ENCODE measurements at regions of chr20 and their contacts with region 1.

Region 1: GRCh38 chr20:50189681-50190582 is 698 bp upstream of the CEBPB start:
- DNase-seq: peak; percentile 91
- H3K4me3 ChIP-seq: peak overlapping the region; percentile 85
- H3K27ac ChIP-seq: peak overlapping the region; percentile 99
- H3K4me1 ChIP-seq: no peaks in the 10 kb centered on the region
- H3K27me3 ChIP-seq: no peaks in the 10 kb centered on the region
- CTCF ChIP-seq: peak; percentile 35

Region 2: GRCh38 chr20:50058747-50059404 is 131.1 kb before region 1 on chr20:
- intact Hi-C with region 1: no loop called
- DNase-seq: no peak
- H3K4me3 ChIP-seq: no peak overlapping the region
- H3K27ac ChIP-seq: no peak overlapping the region
- H3K4me1 ChIP-seq: no peaks in the 10 kb centered on the region
- H3K27me3 ChIP-seq: no peaks in the 10 kb centered on the region
- CTCF ChIP-seq: no peak

Region 3: DNA sequence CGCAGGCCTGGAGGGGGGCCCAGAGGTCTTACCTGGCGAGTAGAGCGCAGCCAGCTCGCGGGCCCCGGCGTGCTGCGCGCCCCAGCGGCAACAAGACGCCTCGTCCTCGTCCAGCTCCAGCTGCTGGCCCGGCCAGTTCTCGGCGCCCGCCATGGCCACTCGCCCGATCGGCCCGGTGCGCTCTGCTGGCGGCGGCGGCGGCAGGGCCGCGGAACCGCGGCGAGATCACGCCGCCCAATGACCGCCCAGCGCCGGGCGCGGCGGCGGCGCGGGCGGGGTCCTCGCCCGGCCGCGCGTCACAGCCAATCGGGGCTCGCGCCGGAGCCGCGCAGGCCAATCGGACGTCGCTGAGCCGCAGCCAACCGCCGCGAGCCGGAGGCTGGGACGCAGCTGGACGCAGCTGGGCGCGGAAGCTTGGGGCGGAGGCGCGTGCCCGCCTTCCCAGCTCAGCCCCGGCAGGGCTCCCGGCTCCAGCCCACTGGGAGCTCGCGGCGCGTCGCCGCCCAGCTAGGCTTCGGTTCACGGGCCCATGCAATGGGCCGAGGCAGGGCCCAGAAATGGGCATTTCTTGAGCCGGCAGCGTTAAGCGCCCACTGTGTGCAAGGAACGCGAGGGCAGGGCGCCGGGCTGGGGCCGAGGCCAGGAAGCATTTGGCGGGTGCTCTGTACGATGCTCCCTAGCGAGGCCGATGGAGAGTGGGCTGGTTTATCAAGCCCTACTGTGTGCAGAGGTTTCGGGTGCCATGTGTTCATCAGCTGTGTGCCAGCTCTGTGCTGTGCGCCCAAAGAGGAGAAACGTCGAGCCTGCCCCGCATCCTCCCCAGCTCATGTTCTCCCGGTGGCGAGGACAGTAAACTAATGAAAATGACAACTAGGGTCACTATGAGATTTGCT is 36.2 kb before region 1 on chr20 and contains the start of gene PEDS1:
- intact Hi-C with region 1: no loop called
- DNase-seq: peak; percentile 89
- H3K4me3 ChIP-seq: peak within 1 kb of the TSS; percentile 95
- H3K27ac ChIP-seq: peak within 1 kb of the TSS; percentile 94
- H3K4me1 ChIP-seq: peaks cover 24% of the 10 kb centered on the region
- H3K27me3 ChIP-seq: no peaks in the 10 kb centered on the region
- CTCF ChIP-seq: no peak
- total RNA-seq, gene PEDS1: 23.1 to 29.1 TPM

Region 4: DNA sequence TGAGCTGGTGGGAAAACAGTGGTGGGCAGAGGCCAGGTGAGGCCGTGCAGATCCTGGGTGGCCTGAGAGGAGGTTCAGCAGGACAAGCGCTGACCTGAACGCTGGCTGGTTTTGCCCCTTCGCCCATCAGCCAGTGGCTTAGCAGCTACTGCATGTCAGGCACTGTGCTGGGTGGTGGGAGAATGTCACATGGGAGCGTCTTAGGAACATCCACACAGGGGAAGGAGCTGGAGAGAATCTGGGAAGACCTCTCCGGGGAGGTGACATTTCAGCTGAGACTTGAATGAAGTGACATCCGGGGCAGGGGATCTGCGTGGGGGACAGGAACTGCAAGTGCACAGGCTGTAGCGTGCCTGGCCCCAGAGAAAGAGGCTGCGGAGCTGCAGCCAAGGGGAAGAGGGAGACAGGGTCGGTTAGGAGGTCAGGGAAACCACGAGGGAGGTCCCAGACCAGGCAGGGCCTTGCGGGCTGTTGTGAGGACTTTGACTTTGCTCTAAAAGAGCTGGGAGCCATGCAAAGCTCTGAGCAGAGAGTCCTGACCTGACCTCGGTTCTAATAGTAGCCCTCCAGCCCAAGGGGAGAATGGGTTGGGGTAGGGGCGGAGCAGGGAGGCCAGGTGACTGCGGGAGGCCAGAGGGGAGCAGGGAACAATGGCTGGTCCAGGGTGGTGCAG is 163.5 kb after region 1 on chr20:
- intact Hi-C with region 1: loop called (anchors 10 kb)
- DNase-seq: no peak
- H3K4me3 ChIP-seq: no peak overlapping the region
- H3K27ac ChIP-seq: no peak overlapping the region
- H3K4me1 ChIP-seq: no peaks in the 10 kb centered on the region
- H3K27me3 ChIP-seq: no peaks in the 10 kb centered on the region
- CTCF ChIP-seq: no peak

Region 5: DNA sequence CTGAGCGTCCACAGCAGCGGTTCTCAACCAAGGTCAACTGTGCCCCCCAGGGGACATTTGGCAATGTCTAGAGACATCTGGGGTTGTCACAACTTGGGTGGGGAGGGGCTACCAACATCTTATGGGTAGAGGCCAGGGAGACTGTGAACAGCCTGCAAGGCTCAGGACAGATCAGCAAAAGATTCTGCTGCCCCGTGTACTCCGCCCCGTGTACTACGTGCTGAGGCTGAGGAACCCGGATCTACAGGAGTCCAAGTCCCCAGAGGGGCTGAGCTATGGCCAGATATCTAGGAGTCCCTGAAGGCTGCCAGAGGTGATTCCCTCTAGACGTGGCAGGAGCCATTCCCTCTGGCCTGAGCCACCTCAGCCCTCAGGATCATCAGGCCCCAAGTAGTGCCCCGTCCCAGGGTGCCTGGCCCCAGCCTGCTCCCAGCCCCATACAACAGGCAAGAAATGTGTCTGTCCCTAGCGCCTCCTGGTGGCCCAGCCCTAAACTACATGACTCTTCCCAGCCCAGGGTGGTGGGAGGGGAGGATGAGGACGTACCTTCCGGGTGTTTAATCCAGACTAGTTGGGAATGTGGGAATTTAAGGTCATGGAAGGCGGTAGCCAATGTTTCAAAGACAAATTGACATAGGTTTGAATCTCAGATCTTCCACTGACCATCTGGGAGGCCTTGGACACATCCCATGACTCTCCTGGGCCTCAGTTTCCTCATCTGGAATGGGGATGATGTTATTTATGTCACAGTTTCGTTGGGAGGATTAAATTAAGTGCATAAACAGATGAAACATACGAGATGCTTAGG is 270.7 kb after region 1 on chr20:
- intact Hi-C with region 1: loop called (anchors 2 kb)
- DNase-seq: peak; percentile 95
- H3K4me3 ChIP-seq: no peak overlapping the region
- H3K27ac ChIP-seq: no peak overlapping the region
- H3K4me1 ChIP-seq: peaks cover 5% of the 10 kb centered on the region
- H3K27me3 ChIP-seq: no peaks in the 10 kb centered on the region
- CTCF ChIP-seq: peak; percentile 92

Region 6: GRCh38 chr20:50575847-50576720 is 386.2 kb after region 1 on chr20:
- intact Hi-C with region 1: loop called (anchors 5 kb)
- DNase-seq: peak; percentile 76
- H3K4me3 ChIP-seq: no peak overlapping the region
- H3K27ac ChIP-seq: no peak overlapping the region
- H3K4me1 ChIP-seq: peaks cover 4% of the 10 kb centered on the region
- H3K27me3 ChIP-seq: no peaks in the 10 kb centered on the region
- CTCF ChIP-seq: peak; percentile 78

Region 7: DNA sequence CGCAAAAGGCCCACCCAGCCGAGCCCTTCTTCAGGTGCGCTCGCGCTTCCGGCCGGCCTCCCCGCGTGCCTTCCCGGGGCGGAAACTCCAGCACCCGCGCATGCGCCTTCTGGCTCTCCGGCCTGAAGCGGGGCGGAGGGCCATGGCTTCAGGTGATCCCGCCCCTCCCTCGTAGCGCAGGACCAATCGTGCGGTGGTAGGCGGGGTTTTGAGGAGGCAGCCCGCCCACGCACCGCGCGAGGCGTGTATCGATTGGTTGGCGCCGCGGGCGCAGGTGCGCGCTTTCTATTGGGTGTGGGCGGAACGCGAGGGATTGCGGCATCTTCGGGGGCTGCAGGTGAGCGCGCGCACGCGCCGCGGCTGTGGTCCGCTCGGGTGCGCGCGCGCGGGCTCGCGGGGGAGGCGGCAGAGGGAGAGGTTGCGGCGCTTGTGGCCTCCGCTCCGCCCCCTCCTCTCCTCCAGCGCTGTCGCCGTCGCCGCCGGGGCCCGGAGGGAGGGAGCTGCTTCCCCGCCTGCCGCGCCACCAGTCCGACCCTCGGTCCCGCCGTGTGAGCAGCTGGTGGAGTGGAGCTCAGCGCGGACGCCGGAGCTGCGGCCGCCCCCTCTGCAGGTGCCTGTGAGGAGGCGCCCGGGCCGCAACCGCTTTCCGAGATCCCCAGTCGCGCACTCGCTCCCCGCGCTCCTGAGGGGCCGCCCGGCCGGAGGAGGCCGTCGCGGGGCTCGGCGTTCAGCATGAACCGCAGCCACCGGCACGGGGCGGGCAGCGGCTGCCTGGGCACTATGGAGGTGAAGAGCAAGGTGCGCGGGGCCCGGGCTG is 541.3 kb after region 1 on chr20 and contains the start of gene PARD6B:
- intact Hi-C with region 1: loop called (anchors 10 kb)
- DNase-seq: peak; percentile 99
- H3K4me3 ChIP-seq: peak within 1 kb of the TSS; percentile 94
- H3K27ac ChIP-seq: peak within 1 kb of the TSS; percentile 91
- H3K4me1 ChIP-seq: no peaks in the 10 kb centered on the region
- H3K27me3 ChIP-seq: no peaks in the 10 kb centered on the region
- CTCF ChIP-seq: no peak
- total RNA-seq, gene PARD6B: 16.6 to 35.6 TPM